ENCODE measurements at regions of chr1 and their contacts with region 1.

Region 1: DNA sequence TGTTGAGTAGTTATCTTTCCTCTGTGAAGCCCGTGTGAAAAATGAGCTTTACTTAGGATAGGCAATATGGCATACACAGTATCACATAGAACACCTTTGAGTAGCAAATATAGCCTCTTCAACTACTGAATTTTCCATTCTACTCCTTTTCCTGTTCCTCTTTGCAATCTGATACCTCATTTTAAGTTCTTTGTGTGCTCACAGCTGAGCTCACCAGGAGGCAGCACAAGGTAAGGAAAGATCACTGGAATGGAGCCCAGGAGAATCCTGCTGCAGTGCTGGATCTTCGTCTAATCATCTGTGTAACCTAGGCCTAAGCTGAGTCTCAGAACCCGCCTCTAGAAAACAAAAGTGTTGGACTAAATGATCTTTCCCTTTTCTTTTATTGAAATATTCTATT is 171.0 kb downstream of the LRRC40 start:
- DNase-seq: peak; percentile 84
- ATAC-seq: peak; percentile 97
- H3K4me3 ChIP-seq: no peak overlapping the region
- H3K27ac ChIP-seq: no peak overlapping the region
- H3K4me1 ChIP-seq: no peaks in the 10 kb centered on the region; the same call in 1 of the 2 replicates
- H3K27me3 ChIP-seq: peaks cover 10% of the 10 kb centered on the region; the same call in 1 of the 2 replicates
- CTCF ChIP-seq: peak; percentile 76

Region 2: DNA sequence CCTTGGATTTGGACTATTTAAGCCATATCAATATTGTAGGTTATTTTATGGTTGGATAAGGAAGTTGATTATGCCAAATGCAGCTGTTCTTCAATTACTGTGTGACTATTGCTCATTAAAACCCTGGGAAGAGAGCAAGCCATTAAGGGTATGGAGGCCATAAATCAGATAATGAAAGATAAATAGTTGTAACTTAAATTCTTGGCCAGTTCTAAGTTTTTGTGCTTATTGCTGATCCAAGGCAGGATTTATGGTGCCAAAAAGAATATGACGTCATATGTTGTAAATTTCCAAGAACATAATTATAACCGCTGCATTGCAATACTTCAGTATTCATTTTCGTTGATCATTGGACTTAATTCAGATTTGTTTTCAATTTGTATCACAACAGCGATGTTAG is 40.6 kb before region 1 on chr1:
- CTCF ChIA-PET with region 1: no interaction called
- POLR2A ChIA-PET with region 1: no interaction called
- intact Hi-C with region 1: no loop called
- DNase-seq: no peak
- ATAC-seq: no peak
- H3K4me3 ChIP-seq: no peak overlapping the region
- H3K27ac ChIP-seq: no peak overlapping the region
- H3K4me1 ChIP-seq: no peaks in the 10 kb centered on the region
- H3K27me3 ChIP-seq: peaks cover 10% of the 10 kb centered on the region; the same call in 1 of the 2 replicates
- CTCF ChIP-seq: no peak

Region 3: DNA sequence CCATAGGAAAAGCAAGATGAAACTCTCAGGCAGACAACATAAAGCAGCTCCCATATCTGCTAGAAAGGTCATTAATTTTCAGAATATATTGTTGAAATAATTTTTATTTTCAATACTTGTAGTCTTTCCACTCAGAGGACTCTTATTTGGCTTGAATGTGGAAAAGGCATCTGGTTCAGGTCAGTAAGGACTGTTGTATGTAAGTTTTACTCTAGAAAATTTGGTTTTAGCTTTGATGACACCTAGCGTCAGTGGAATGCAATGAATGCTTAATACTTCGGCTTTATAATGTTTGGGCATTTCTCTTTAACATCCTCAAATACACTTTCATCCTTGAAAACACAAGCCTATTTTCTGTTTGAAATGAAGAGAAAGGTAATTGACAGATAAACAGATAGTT is 107.7 kb after region 1 on chr1:
- CTCF ChIA-PET with region 1: interaction called, 17 read pairs
- POLR2A ChIA-PET with region 1: interaction called, 3 read pairs
- intact Hi-C with region 1: loop called (anchors 1 kb)
- DNase-seq: peak; percentile 43
- ATAC-seq: peak; percentile 59
- H3K4me3 ChIP-seq: no peak overlapping the region
- H3K27ac ChIP-seq: no peak overlapping the region
- H3K4me1 ChIP-seq: peaks cover 11% of the 10 kb centered on the region
- H3K27me3 ChIP-seq: no peaks in the 10 kb centered on the region
- CTCF ChIP-seq: peak; percentile 68

Region 4: GRCh38 chr1:70227439-70227838 is 193.0 kb after region 1 on chr1:
- CTCF ChIA-PET with region 1: no interaction called
- POLR2A ChIA-PET with region 1: no interaction called
- intact Hi-C with region 1: loop called (anchors 2 kb)
- DNase-seq: no peak
- ATAC-seq: peak; percentile 79
- H3K4me3 ChIP-seq: no peak overlapping the region
- H3K27ac ChIP-seq: no peak overlapping the region
- H3K4me1 ChIP-seq: peaks cover 38% of the 10 kb centered on the region
- H3K27me3 ChIP-seq: no peaks in the 10 kb centered on the region
- CTCF ChIP-seq: no peak

Region 5: GRCh38 chr1:70552662-70553566 is 518.5 kb after region 1 on chr1:
- CTCF ChIA-PET with region 1: no interaction called
- POLR2A ChIA-PET with region 1: no interaction called
- intact Hi-C with region 1: no loop called
- DNase-seq: no peak
- ATAC-seq: no peak
- H3K4me3 ChIP-seq: no peak overlapping the region
- H3K27ac ChIP-seq: no peak overlapping the region
- H3K4me1 ChIP-seq: no peaks in the 10 kb centered on the region
- H3K27me3 ChIP-seq: peaks cover 75% of the 10 kb centered on the region
- CTCF ChIP-seq: no peak

Measured in PC-3 (cell line).